Activated T-helper 1 cell treated with anti-CD3 and anti-CD28 coated beads, Interleukin-12 subunit alpha, Interleukin-12 subunit beta, Interleukin-2, Interleukin-4 antibody, amounts not matched to agents 30 ng/mL and 10 ng/mL and 1 ng/mL, durations not matched to agents 14 hours and 24 hours and 36 hours (primary cell): ENCODE measurements at regions of chr1 and their contacts with region 1.

Region 1: DNA sequence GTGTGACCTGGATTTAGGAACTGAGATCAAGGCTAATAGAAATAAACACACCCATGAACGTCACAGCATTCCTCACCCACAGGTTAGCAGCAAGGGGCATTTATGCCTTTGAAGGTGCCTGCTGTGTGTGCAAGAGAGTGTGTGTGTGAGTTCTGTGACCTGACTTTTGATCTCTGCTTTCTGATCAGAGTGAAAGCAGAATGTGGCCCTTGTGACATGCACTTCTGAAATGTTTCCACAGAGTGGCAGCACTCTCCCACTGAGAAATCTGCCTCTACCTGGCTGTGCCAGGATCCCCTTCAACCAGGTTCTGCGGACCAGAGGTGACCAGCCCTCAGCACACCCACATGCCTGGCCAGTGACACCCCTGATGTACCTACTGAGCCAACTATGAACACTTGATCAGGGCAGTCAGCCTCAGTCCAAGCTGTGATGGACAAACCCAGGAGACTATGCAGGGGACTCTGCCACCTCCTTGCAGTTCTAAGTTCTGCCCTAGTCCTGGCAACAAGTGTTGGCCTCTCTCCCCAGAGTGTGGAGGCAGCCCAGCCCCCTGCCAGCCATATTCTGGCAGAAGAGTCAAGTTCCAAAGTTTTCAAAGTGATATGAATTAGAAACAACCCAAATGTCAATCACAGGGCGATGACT is 41.0 kb downstream of the RXRG start:
- DNase-seq: peak; percentile 21
- H3K4me3 Mint-ChIP-seq: no peak overlapping the region
- H3K27ac Mint-ChIP-seq: no peak overlapping the region
- H3K4me1 Mint-ChIP-seq: peaks cover 4% of the 10 kb centered on the region
- H3K27me3 Mint-ChIP-seq: peaks cover 45% of the 10 kb centered on the region

Region 2: DNA sequence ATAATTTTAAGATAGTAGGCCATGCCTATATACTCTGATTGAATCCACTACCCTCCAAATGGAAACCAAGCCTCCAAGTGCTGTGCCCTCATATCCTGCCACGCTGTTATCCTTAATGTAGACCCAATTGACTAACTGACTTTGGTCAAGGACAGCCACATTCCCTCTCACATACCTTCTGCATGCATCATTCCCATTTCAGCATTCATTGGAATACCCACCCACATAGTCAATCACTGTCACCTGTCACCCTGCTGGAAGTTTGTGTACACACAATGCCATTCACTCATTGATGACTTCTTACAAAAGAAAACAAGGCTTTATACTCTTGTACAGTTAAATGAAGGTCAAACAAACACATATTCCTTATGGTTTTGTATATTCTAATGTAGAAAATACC is 1066.1 kb before region 1 on chr1:
- intact Hi-C with region 1: no loop called
- DNase-seq: no peak
- H3K4me3 Mint-ChIP-seq: no peak overlapping the region
- H3K27ac Mint-ChIP-seq: no peak overlapping the region
- H3K4me1 Mint-ChIP-seq: no peaks in the 10 kb centered on the region
- H3K27me3 Mint-ChIP-seq: no peaks in the 10 kb centered on the region

Region 3: DNA sequence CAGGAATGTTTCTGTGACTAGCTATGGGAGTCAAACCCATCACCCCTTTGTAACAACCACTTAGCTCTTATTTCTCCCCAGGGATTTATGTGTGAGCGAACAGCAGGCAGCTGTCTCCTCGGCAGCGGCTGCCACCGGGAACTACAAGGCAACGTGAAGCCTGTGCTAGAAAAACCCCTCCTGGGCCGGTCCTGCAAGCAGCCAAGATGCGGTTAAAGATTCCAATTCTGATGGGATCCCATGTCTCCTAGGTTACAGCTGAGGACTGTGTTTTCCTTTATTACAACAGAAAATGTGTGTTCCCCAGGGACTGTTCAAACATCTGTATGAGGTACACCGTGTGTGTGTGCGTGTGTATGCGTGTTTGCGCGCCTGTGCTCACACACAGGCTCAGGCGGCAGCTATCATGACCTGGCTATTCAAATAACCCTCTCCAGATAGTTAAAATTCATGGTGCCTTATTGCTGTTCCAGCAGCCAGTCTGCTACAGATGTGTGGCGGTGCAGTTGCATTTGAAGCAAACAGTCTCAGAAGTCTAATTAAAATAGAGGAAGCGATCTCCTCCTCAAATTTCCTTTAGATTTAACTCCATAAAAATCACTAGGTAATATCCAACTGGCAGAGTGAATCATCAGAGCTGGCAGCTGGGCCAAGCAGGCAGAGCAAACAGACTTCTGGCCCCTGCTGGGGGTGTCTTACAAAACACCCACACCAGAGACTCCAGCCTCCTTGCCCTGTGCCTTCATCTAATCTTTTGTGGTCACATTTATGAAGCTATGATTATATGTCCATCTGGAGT is 115.4 kb before region 1 on chr1:
- intact Hi-C with region 1: no loop called
- DNase-seq: no peak
- H3K4me3 Mint-ChIP-seq: no peak overlapping the region
- H3K27ac Mint-ChIP-seq: no peak overlapping the region
- H3K4me1 Mint-ChIP-seq: no peaks in the 10 kb centered on the region
- H3K27me3 Mint-ChIP-seq: peaks cover 15% of the 10 kb centered on the region

Region 4: DNA sequence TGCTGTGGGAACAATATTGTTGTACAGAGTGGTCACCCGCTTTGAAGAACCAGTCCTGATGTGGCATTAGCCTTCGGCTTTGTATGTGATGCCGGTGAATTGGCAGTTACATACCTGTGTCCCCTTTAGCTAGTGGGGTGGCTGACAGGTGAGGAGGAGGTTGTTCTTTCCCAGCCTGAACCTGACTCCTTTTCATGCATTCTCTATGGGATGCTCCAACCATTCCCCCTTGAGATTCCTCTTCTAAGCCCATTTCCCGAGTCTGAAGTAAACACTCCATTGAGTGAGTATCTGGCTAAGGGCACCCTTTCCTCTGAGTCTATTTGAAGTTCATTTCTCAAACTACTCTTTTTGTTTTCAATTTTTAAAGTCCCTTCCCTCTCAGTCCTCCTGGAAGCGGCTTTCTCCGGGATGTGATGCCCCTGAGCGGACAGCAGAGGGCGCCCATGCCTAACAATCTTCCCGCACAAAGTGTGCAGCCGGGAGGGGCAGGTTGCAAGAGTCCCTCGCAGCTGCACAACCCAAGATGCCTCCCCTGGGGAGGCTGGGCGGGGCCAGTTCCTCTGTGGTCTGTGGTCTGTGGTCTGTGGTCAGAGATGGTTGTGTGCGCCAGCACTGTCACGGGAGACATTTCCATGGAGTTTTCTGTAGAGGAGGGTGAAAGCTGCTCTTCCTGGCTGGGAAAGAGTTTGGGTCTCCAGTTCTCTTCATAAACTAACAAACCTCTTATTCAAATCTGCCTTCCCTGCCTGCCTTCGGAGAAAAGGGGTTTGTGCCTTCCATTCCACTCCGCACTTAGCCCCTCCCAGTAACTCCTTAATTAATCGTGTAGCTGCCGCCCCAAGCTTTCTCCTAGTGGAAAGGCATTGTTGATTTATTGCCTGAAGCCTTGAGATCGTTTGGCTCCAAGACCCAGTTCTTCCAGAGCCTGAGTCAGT is 11.1 kb before region 1 on chr1:
- intact Hi-C with region 1: loop called (anchors 1 kb)
- DNase-seq: peak; percentile 90
- H3K4me3 Mint-ChIP-seq: peak overlapping the region; percentile 58
- H3K27ac Mint-ChIP-seq: peak overlapping the region; percentile 92
- H3K4me1 Mint-ChIP-seq: peaks cover 25% of the 10 kb centered on the region
- H3K27me3 Mint-ChIP-seq: peaks cover 80% of the 10 kb centered on the region

Region 5: DNA sequence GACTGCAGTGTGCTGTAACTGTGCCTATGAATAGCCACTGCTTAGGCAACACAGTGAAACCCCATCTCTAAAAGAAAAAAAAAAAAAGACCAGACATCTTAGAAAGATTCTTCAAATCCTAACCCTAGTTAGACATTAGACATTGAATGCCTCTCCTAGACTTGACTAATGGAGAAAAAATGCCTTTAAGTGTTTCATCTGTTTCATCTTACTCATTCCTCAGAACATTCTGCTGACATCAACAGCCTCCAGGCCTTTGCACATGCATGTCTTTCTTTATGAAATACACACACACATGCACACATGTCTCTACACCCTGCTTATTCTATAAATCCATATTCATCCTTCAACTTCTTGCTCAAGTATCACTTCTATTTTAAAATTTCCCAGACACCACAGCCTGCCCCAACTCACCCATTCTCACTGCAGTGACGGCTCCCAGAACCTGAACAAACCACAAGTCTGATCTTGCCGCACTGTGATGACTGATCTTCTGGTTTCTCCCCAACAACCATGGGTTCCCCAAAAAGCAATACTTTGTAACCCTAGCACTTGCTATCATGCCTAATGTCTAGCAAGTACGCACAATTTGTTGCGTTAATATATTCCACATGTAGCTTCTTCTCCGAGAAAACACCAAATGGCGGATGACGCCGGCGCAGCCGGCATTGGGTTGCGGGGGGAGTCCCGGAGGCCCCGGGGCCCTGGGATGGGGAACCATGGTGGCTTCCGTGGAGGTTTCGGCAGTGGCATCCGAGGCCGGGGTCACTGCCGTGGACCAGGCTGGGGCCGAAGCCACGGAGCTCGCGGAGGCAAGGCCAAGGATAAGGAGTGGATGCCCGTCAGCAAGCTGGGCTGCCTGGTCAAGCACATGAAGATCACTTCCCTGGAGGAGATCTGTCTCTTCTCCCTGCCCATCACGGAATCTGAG is 177.2 kb after region 1 on chr1:
- intact Hi-C with region 1: no loop called
- DNase-seq: no peak
- H3K4me3 Mint-ChIP-seq: no peak overlapping the region
- H3K27ac Mint-ChIP-seq: no peak overlapping the region
- H3K4me1 Mint-ChIP-seq: no peaks in the 10 kb centered on the region
- H3K27me3 Mint-ChIP-seq: peaks cover 20% of the 10 kb centered on the region